ENCODE measurements at regions of chr12 and their contacts with region 1.

Region 1: DNA sequence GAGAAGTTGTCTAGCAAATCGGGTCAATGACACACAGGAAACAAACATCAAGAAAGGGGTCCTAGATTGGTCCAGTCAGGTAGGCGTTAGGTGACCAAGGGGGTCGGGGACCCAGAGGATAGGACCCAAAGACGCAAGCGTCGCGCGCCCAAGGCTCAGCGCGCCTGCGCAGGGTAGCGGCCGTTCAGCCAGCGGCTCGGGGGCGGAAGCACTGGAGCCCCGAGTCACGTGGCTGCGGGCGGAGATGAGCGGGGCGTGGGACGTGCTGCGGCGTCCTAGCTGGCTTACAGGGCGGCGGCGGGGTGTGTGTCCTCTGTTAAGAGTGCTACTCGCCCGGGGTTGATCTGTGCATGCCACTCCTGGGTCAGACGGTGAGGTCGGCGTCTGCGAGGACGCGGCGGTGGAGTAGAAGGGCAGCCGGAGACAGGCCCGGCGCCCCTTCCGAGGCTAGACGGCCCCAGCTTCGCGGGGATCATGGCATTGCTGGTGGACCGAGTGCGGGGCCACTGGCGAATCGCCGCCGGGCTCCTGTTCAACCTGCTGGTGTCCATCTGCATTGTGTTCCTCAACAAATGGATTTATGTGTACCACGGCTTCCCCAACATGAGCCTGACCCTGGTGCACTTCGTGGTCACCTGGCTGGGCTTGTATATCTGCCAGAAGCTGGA is at the start of gene SLC35E3:
- H3K4me3 Mint-ChIP-seq: peak within 1 kb of the TSS; percentile 94
- H3K27ac Mint-ChIP-seq: peak within 1 kb of the TSS; percentile 93
- H3K4me1 Mint-ChIP-seq: peaks cover 43% of the 10 kb centered on the region
- H3K27me3 Mint-ChIP-seq: no peaks in the 10 kb centered on the region

Region 2: DNA sequence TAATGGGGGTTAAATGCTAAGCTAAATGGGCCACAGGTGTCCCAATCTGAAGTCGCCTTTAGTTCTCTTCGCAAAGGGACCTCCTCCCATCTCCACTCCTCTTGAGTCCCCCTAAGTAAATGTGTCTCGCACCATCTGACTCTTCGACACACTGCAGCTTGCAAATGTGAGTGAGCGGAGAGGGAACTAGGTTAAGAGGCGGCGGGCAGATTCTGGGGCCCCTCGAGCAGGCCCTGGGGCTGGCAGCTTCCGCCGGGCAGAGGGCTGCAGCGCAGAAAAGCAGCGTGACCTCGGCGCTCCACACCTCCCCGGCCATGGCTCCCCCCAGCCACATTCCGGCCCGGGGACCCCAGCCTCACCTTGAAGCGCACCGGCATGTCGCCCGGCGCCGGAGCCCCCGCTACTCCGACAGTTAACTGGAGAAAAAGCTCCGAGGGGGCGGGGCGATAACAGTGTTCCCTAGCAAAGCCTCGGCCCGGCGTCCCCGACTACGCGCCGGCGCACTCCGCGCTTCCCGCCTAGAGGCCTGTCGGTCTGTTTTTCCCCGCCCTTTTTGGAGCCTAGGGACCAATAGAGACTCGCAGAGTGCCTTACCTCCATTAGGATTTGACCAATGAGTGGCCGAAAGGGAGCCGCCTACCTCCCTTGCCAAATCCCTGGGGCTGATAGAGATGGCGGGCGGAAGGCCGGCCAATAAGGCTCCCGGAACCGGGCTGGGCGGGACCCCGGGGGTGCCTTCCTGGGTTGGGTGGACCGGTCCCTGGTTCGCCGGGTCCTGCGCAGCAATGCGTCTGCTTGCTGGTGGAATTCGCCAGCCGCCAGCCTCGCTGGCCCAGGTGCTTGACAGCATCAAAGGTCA is 413.9 kb before region 1 on chr12 and contains the start of gene MDM1:
- intact Hi-C with region 1: loop called (anchors 5 kb)
- H3K4me3 Mint-ChIP-seq: peak within 1 kb of the TSS; percentile 85
- H3K27ac Mint-ChIP-seq: peak within 1 kb of the TSS; percentile 85
- H3K4me1 Mint-ChIP-seq: peaks cover 41% of the 10 kb centered on the region
- H3K27me3 Mint-ChIP-seq: no peaks in the 10 kb centered on the region

Region 3: DNA sequence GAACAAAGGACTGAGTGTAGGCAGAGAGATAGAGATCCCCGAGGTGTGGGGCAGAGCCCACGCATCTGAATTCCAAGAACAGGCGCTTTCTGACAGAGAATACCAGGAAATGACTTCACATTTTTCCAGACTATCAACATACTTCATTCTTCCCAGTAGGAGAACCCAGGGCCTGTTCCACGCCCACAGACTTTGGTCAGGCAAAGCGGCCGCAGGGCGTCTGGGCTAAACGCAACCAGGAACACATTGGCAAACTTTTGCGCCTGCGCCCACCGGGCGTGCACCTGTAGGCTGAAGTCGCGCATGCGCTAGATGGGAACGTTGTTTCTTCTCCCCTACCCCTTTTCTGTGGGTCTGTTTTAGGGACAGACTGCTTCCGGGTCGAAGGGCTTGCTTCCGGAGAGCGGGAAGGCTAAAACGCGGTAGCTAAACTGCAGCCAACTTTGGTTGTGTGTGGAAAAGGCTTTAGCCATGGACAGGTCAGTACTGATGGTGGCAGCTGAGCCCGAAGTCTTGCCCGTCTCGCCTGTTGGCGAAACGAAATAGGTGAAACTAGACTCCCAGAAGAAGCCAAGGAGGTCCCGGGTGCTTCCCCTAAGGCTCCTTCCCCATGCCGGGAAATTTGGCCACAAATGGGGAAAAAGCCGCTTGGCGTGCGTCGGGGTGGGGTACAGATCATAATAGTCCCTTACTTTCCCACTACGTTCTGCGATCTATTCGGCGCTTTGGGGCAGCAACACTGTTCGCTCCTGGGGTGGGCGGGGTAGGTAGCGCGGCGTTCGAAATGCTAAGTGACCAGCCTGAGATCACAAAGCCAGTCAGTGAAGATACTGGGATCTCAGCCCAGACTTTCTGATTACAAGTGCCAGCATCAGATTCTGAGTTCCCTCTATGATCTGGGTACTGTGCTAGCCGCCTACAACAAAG is 59.2 kb before region 1 on chr12 and contains the start of gene NUP107:
- intact Hi-C with region 1: loop called (anchors 2 kb)
- H3K4me3 Mint-ChIP-seq: peak within 1 kb of the TSS; percentile 87
- H3K27ac Mint-ChIP-seq: peak within 1 kb of the TSS; percentile 88
- H3K4me1 Mint-ChIP-seq: peaks cover 9% of the 10 kb centered on the region
- H3K27me3 Mint-ChIP-seq: no peaks in the 10 kb centered on the region

Region 4: GRCh38 chr12:68733661-68734071 is 12.4 kb before region 1 on chr12:
- intact Hi-C with region 1: no loop called
- H3K4me3 Mint-ChIP-seq: no peak overlapping the region
- H3K27ac Mint-ChIP-seq: no peak overlapping the region
- H3K4me1 Mint-ChIP-seq: no peaks in the 10 kb centered on the region
- H3K27me3 Mint-ChIP-seq: no peaks in the 10 kb centered on the region

Region 5: GRCh38 chr12:68772714-68773113 is 26.7 kb after region 1 on chr12:
- intact Hi-C with region 1: no loop called
- H3K4me3 Mint-ChIP-seq: no peak overlapping the region
- H3K27ac Mint-ChIP-seq: no peak overlapping the region
- H3K4me1 Mint-ChIP-seq: peaks cover 6% of the 10 kb centered on the region
- H3K27me3 Mint-ChIP-seq: no peaks in the 10 kb centered on the region

Region 6: GRCh38 chr12:68786929-68787328 is 40.9 kb after region 1 on chr12:
- intact Hi-C with region 1: loop called (anchors 2 kb)
- H3K4me3 Mint-ChIP-seq: no peak overlapping the region
- H3K27ac Mint-ChIP-seq: peak overlapping the region; percentile 96
- H3K4me1 Mint-ChIP-seq: peaks cover 50% of the 10 kb centered on the region
- H3K27me3 Mint-ChIP-seq: no peaks in the 10 kb centered on the region

Region 7: GRCh38 chr12:68807576-68808387 is 61.7 kb after region 1 on chr12 and contains the start of gene MDM2:
- intact Hi-C with region 1: loop called (anchors 1 kb)
- H3K4me3 Mint-ChIP-seq: peak within 1 kb of the TSS; percentile 89
- H3K27ac Mint-ChIP-seq: peak within 1 kb of the TSS; percentile 99
- H3K4me1 Mint-ChIP-seq: peaks cover 20% of the 10 kb centered on the region
- H3K27me3 Mint-ChIP-seq: no peaks in the 10 kb centered on the region

Measured in dendritic cell treated with granulocyte-macrophage colony-stimulating factor and Interleukin-4, amounts not matched to agents 40 ng/mL and 50 ng/mL, for 4 days (primary cell).